Calu3 (cell line): ENCODE measurements at regions of chrX and their contacts with region 1.

Region 1: DNA sequence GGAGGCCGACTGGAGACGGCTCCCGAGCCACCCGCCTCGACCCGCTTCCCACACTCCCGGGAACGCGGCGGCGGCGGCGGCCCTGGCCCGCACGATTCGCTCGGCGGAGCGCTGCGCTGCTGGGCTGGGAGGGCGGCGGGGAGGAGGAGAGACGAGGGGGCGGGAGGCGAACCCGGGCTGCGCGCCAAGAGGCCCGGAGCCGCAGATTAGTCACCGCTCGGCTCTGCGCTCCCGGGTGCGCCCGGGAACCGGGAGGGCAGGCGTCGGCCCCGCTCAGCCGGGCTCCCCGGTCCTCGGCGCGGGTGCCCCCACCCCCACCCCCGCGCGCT is 11.2 kb upstream of the BCOR start:
- DNase-seq: peak; percentile 84
- H3K4me3 Mint-ChIP-seq: peak overlapping the region; percentile 73
- H3K27ac Mint-ChIP-seq: peak overlapping the region; percentile 73
- H3K4me1 Mint-ChIP-seq: peaks cover 17% of the 10 kb centered on the region
- H3K27me3 Mint-ChIP-seq: no peaks in the 10 kb centered on the region
- CTCF ChIP-seq: no peak

Region 2: GRCh38 chrX:40153335-40154249 is 44.7 kb after region 1 on chrX:
- CTCF ChIA-PET with region 1: no interaction called
- intact Hi-C with region 1: loop called (anchors 10 kb)
- DNase-seq: peak; percentile 59
- H3K4me3 Mint-ChIP-seq: peak overlapping the region; percentile 67
- H3K27ac Mint-ChIP-seq: no peak overlapping the region
- H3K4me1 Mint-ChIP-seq: no peaks in the 10 kb centered on the region
- H3K27me3 Mint-ChIP-seq: no peaks in the 10 kb centered on the region
- CTCF ChIP-seq: no peak

Region 3: DNA sequence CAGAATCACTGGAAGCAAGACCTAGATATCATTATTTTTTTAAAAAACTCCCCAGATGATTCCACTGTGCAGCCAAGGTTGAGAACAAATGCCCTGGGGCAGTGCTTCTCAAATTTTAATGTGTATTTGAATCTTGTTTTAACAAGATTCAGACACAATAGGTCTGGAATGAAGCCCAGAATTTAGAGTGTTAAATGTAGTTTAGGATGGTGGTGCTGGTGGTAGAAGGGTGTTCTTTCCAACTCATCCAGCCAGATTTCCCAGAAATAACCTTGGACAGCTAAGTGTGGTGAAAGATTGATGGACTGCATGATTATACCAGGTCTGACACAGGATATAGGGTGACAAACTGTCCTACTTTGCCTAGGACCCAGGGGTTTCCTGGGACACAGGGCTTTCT is 746.5 kb after region 1 on chrX:
- CTCF ChIA-PET with region 1: no interaction called
- intact Hi-C with region 1: no loop called
- DNase-seq: no peak
- H3K4me3 Mint-ChIP-seq: no peak overlapping the region
- H3K27ac Mint-ChIP-seq: no peak overlapping the region
- H3K4me1 Mint-ChIP-seq: no peaks in the 10 kb centered on the region
- H3K27me3 Mint-ChIP-seq: no peaks in the 10 kb centered on the region
- CTCF ChIP-seq: no peak